Activated CD4-positive, alpha-beta T cell treated with anti-CD3 and anti-CD28 coated beads for 36 hours (primary cell): ENCODE measurements at regions of chr10 and their contacts with region 1.

Region 1: GRCh38 chr10:103396064-103396788 is at the starts of genes ATP5MK and PDCD11:
- DNase-seq: peak; percentile 98
- ATAC-seq: peak; percentile 100
- H3K4me3 Mint-ChIP-seq: peak within 1 kb of the TSS; percentile 99
- H3K27ac Mint-ChIP-seq: peak within 1 kb of the TSS; percentile 95
- H3K4me1 Mint-ChIP-seq: peaks cover 57% of the 10 kb centered on the region
- H3K27me3 Mint-ChIP-seq: no peaks in the 10 kb centered on the region
- total RNA-seq, gene ATP5MK: 377 to 447 TPM
- total RNA-seq, gene PDCD11: 60.6 to 73.8 TPM

Region 2: GRCh38 chr10:102432162-102432950 is 963.9 kb before region 1 on chr10 and contains the start of gene CUEDC2:
- CTCF ChIA-PET with region 1: no interaction called
- POLR2A ChIA-PET with region 1: no interaction called
- intact Hi-C with region 1: loop called in 1 of 2 experiments (anchors 10 kb)
- DNase-seq: peak; percentile 99
- ATAC-seq: peak; percentile 94
- H3K4me3 Mint-ChIP-seq: peak within 1 kb of the TSS; percentile 85
- H3K27ac Mint-ChIP-seq: peak within 1 kb of the TSS; percentile 94
- H3K4me1 Mint-ChIP-seq: peaks cover 42% of the 10 kb centered on the region
- H3K27me3 Mint-ChIP-seq: no peaks in the 10 kb centered on the region
- total RNA-seq, gene CUEDC2: 60.8 to 72.7 TPM

Region 3: DNA sequence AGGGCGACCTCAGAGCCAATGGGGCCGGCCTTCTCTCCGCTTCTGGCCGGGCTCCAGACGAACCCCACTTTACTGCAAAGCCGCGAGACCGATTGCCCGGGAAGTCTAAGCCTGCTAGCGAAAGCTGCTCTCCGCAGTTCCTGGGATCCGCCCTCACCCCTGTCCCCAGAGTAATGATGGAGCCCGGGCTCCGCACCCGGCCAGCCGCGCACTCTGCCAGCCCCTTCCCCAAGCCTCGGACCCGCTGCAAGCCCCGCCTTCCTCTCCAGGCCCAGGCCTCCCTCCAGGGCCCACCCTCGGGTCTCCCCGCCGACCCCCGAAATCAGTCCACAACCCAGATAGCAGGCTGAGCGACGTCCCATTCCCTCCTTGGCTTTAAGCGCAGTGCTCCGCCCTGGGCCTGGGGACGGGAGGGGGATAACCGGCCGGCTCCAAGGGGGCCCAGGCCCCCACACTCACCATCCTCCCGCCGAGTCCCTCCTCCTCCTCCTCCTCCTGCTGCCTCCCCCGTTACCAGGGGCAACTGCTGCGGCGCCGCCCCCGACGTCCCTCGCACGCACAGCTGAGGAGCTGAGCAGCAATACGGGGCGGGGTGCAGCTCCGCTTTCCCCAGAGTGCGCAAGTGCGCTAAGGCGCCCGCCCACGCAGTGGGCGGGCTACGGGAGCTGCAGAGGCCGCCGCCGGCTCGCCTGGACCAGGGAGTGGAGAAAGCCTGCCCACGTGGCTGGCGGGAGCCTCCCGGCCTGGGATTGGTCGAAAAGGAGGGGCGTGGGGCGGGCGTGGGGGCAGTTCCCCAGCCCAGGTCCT is 682.2 kb before region 1 on chr10 and contains the start of gene ARL3:
- CTCF ChIA-PET with region 1: no interaction called
- POLR2A ChIA-PET with region 1: no interaction called
- intact Hi-C with region 1: loop called in 1 of 2 experiments (anchors 2 kb)
- DNase-seq: peak; percentile 99
- ATAC-seq: peak; percentile 90
- H3K4me3 Mint-ChIP-seq: peak within 1 kb of the TSS; percentile 82
- H3K27ac Mint-ChIP-seq: peak within 1 kb of the TSS; percentile 81
- H3K4me1 Mint-ChIP-seq: peaks cover 59% of the 10 kb centered on the region
- H3K27me3 Mint-ChIP-seq: no peaks in the 10 kb centered on the region
- total RNA-seq, gene ARL3: 6.4 to 6.9 TPM

Region 4: DNA sequence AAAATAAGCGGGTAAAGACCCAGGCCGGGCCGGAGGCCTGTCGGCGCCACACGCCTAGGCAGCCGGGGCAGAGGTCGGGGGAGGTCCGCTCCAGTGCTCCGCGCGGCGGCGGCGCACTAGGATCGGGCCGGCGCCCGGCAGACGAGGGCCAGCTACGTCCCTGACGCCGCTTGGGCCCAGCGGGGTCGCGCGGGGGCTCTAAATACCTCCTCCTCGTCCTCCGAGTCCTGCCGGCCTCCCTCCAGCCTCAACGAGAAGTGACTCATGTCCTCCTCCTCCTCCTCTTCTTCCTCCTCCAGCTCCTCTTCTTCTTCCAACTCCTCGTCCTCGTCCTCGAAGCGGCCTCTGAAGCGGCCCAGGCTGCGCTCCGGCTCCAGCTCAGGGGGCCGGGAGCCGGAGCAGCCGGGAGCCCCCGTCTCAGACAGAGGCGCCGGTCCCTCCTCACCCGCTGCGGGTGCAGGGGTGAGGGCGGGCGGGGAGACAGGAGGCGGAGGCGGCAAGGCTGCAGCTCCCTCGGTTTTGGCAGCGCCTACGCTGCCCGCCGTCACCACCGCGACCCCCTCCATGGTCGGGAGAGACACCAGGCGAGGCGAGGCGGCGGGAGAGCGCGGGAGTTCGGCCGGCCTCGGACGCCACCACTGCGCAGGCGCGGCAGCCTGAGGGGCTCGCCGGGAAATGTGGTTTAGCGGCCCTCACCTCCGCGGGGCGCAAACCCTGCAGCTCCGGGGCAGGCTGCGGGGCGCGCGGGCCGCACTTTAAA is 45.5 kb before region 1 on chr10 and contains the start of gene PCGF6:
- CTCF ChIA-PET with region 1: interaction called, 4 read pairs
- POLR2A ChIA-PET with region 1: no interaction called
- intact Hi-C with region 1: loop called (anchors 1 to 5 kb)
- DNase-seq: peak; percentile 83
- ATAC-seq: peak; percentile 86
- H3K4me3 Mint-ChIP-seq: peak within 1 kb of the TSS; percentile 86
- H3K27ac Mint-ChIP-seq: peak within 1 kb of the TSS; percentile 84
- H3K4me1 Mint-ChIP-seq: peaks cover 9% of the 10 kb centered on the region
- H3K27me3 Mint-ChIP-seq: no peaks in the 10 kb centered on the region
- total RNA-seq, gene PCGF6: 10.4 to 14.8 TPM

Region 5: DNA sequence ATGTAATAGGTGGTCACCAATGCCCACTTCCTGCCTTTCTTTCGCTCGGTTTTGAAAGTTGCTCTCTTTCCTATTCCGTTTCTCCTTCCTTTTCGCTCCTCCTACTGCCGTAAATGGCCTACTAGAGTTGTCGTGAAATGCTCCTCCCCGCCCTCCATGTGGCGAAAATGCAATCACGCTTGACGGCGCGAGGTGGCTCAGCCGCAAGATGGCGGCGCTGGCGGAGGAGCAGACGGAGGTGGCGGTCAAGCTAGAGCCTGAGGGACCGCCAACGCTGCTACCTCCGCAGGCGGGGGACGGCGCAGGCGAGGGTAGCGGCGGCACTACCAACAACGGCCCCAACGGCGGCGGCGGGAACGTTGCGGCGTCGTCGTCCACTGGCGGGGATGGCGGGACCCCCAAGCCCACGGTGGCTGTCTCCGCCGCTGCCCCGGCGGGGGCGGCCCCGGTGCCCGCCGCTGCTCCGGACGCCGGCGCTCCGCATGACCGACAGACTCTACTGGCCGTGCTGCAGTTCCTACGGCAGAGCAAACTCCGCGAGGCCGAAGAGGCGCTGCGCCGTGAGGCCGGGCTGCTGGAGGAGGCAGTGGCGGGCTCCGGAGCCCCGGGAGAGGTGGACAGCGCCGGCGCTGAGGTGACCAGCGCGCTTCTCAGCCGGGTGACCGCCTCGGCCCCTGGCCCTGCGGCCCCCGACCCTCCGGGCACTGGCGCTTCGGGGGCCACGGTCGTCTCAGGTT is 28.3 kb before region 1 on chr10 and contains the start of gene TAF5:
- CTCF ChIA-PET with region 1: interaction called, 9 read pairs
- POLR2A ChIA-PET with region 1: interaction called, 4 read pairs
- intact Hi-C with region 1: loop called (anchors 1 kb)
- DNase-seq: peak; percentile 95
- ATAC-seq: peak; percentile 61
- H3K4me3 Mint-ChIP-seq: peak within 1 kb of the TSS; percentile 81
- H3K27ac Mint-ChIP-seq: peak within 1 kb of the TSS; percentile 85
- H3K4me1 Mint-ChIP-seq: peaks cover 16% of the 10 kb centered on the region
- H3K27me3 Mint-ChIP-seq: no peaks in the 10 kb centered on the region
- total RNA-seq, gene TAF5: 11.2 to 11.4 TPM

Region 6: DNA sequence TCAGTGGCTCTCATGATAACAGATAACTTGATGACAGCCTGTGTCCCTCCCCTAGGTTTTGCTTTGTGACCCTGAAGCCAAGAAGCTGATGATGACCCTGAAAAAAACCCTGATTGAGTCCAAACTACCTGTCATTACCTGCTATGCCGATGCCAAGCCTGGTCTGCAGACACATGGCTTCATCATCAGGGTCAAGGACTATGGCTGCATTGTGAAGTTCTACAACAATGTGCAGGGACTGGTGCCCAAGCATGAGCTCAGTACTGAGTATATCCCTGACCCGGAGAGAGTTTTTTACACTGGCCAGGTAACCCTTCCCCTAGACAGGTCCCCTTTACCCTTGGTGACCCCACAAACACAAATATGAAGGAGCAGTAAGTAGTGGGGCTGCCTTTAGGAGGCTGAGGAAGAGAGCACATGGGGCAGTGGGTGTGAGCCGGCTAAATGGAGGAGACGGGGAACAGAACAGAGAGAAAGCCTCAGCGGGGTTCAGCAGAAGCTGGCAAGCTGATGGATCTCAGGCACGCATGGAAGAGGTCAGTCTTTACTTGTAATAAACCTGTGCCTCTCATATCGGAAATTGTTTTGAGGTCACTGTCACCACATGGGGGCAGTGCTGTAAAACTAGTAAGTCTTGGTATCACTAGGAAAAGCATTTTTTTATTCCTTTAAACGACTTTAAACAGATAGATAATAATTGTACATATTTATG is 20.4 kb after region 1 on chr10:
- CTCF ChIA-PET with region 1: interaction called, 10 read pairs
- POLR2A ChIA-PET with region 1: no interaction called
- intact Hi-C with region 1: no loop called
- DNase-seq: peak; percentile 70
- ATAC-seq: peak; percentile 55
- H3K4me3 Mint-ChIP-seq: no peak overlapping the region
- H3K27ac Mint-ChIP-seq: no peak overlapping the region
- H3K4me1 Mint-ChIP-seq: no peaks in the 10 kb centered on the region
- H3K27me3 Mint-ChIP-seq: no peaks in the 10 kb centered on the region

Region 7: GRCh38 chr10:103470761-103471653 is 74.8 kb after region 1 on chr10:
- CTCF ChIA-PET with region 1: no interaction called
- POLR2A ChIA-PET with region 1: no interaction called
- intact Hi-C with region 1: loop called in 1 of 2 experiments (anchors 1 kb)
- DNase-seq: peak; percentile 80
- ATAC-seq: peak; percentile 91
- H3K4me3 Mint-ChIP-seq: no peak overlapping the region
- H3K27ac Mint-ChIP-seq: peak overlapping the region; percentile 61
- H3K4me1 Mint-ChIP-seq: peaks cover 18% of the 10 kb centered on the region
- H3K27me3 Mint-ChIP-seq: no peaks in the 10 kb centered on the region

Region 8: GRCh38 chr10:103534581-103535508 is 138.6 kb after region 1 on chr10:
- CTCF ChIA-PET with region 1: no interaction called
- POLR2A ChIA-PET with region 1: no interaction called
- intact Hi-C with region 1: no loop called
- DNase-seq: no peak
- ATAC-seq: no peak
- H3K4me3 Mint-ChIP-seq: no peak overlapping the region
- H3K27ac Mint-ChIP-seq: no peak overlapping the region
- H3K4me1 Mint-ChIP-seq: no peaks in the 10 kb centered on the region
- H3K27me3 Mint-ChIP-seq: peaks cover 13% of the 10 kb centered on the region